ENCODE measurements at regions of chr15 and their contacts with region 1.

Region 1: DNA sequence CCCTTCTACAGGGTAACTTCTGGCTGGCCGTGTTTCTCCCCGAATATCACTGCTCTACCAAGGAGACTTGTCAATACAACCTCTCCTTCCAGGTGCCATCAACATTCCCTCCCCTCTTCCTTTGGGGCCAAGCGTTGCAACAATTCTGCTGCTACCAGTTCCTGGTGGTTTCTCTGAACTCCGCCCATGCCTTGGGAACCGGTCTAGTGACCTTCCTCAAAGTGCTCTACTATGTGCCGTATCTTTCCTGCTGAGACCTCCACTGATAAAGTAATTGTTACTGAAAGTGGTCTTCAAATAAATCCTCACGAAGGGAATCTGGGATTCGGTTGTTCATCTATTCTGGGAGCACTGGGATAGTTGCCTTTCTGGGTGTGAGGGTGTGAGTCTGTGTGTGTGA is 26.2 kb downstream of the PCSK6 start:
- DNase-seq: no peak
- H3K4me3 ChIP-seq: no peak overlapping the region
- H3K4me3 Mint-ChIP-seq: no peak overlapping the region
- H3K27ac Mint-ChIP-seq: peak overlapping the region; percentile 41
- H3K4me1 ChIP-seq: peaks cover 13% of the 10 kb centered on the region
- H3K4me1 Mint-ChIP-seq: peaks cover 18% of the 10 kb centered on the region
- H3K27me3 ChIP-seq: no peaks in the 10 kb centered on the region
- H3K27me3 Mint-ChIP-seq: no peaks in the 10 kb centered on the region
- CTCF ChIP-seq: no peak

Region 2: DNA sequence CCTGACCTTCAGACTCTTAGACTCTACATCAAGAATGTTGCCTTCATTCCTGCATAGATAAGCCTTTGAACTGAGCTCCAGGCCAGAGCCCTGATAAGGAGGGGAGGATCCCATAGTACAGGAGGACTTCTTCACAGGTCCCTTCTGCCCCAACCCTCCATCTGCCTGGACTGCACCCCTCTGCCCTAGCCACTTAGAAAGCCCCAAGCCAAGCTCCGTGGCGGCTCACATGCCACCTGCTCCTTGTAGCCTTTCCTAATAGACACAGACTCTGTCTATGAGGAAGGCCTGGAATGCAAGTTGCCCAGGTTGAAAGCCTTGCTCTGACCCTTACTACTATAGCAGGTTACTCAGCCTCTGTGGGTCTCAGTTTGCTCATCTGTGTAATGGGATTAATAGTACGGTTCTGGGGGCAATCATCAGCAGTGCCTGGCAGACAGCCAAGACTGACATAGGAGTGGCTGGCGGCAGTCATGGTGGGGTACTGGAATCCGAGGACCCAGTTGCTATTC is 14.6 kb after region 1 on chr15:
- CTCF ChIA-PET with region 1: no interaction called
- POLR2A ChIA-PET with region 1: no interaction called
- intact Hi-C with region 1: loop called (anchors 1 kb)
- DNase-seq: peak; percentile 88 to 94
- H3K4me3 ChIP-seq: no peak overlapping the region
- H3K4me3 Mint-ChIP-seq: peak overlapping the region; percentile 56
- H3K27ac Mint-ChIP-seq: peak overlapping the region; percentile 97
- H3K4me1 ChIP-seq: peaks cover 62% of the 10 kb centered on the region
- H3K4me1 Mint-ChIP-seq: peaks cover 60% of the 10 kb centered on the region
- H3K27me3 ChIP-seq: no peaks in the 10 kb centered on the region
- H3K27me3 Mint-ChIP-seq: no peaks in the 10 kb centered on the region
- CTCF ChIP-seq: no peak

Measured in Caco-2 (cell line).